ENCODE measurements at regions of chr7 and their contacts with region 1.

Region 1: GRCh38 chr7:22445140-22445743 is 54.7 kb downstream of the STEAP1B start:
- DNase-seq: peak; percentile 83 to 88 (median 88)
- ATAC-seq: peak; percentile 93 to 99 (median 96)
- H3K4me3 ChIP-seq: peak overlapping the region in 4 of 12 donors; percentile 5 to 19 (median 6)
- H3K27ac ChIP-seq: peak overlapping the region; percentile 34 to 87 (median 71)
- H3K4me1 ChIP-seq: peaks cover 3 to 36% (median 27%) of the 10 kb centered on the region in 12 donors
- H3K27me3 ChIP-seq: no peaks in the 10 kb centered on the region
- CTCF ChIP-seq: no peak
- POLR2A ChIP-seq: no peak

Region 2: GRCh38 chr7:22166928-22167327 is 278.3 kb before region 1 on chr7:
- intact Hi-C with region 1: no loop called
- DNase-seq: no peak
- ATAC-seq: no peak
- H3K4me3 ChIP-seq: no peak overlapping the region
- H3K27ac ChIP-seq: no peak overlapping the region
- H3K4me1 ChIP-seq: no peaks in the 10 kb centered on the region
- H3K27me3 ChIP-seq: no peaks in the 10 kb centered on the region
- CTCF ChIP-seq: no peak
- POLR2A ChIP-seq: no peak

Region 3: GRCh38 chr7:22219036-22219435 is 226.2 kb before region 1 on chr7:
- intact Hi-C with region 1: loop called in 2 of 10 experiments (anchors 5 to 10 kb)
- DNase-seq: no peak
- ATAC-seq: peak; percentile 15 to 47 (median 43)
- H3K4me3 ChIP-seq: peak overlapping the region; percentile 18 to 71 (median 56)
- H3K27ac ChIP-seq: peak overlapping the region; percentile 61 to 89 (median 82)
- H3K4me1 ChIP-seq: peaks cover 0 to 49% (median 15%) of the 10 kb centered on the region in 12 donors
- H3K27me3 ChIP-seq: no peaks in the 10 kb centered on the region
- CTCF ChIP-seq: no peak
- POLR2A ChIP-seq: peak in 1 of 2 donors; percentile 23

Region 4: DNA sequence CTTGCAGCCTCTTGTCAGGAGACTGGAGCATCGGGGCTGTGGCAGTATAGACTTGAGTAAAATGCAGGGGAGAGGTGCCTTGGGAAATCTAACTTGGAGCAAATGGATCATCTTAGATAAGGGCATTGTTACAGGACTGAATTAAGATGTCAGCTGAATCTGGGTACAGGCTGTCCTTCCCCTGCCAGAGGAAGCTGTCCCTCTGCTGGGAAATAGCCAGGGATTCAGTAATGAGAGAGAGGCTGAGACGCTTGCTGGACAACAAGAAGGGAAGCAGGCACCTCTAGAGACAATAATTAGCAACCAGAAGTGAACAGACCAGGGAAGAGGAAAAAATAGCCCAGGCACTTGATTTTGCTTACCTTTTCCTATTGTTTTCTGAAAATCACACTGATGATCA is 67.5 kb before region 1 on chr7:
- intact Hi-C with region 1: loop called in 1 of 10 experiments (anchors 1 kb)
- DNase-seq: peak in 1 of 5 donors; percentile 32
- ATAC-seq: peak; percentile 42 to 72 (median 60)
- H3K4me3 ChIP-seq: no peak overlapping the region
- H3K27ac ChIP-seq: peak overlapping the region in 7 of 12 donors; percentile 1 to 62 (median 33)
- H3K4me1 ChIP-seq: peaks cover 0 to 8% (median 4%) of the 10 kb centered on the region in 12 donors
- H3K27me3 ChIP-seq: no peaks in the 10 kb centered on the region
- CTCF ChIP-seq: no peak
- POLR2A ChIP-seq: no peak

Region 5: GRCh38 chr7:22481726-22482125 is 36.5 kb after region 1 on chr7:
- intact Hi-C with region 1: loop called in 1 of 10 experiments (anchors 2 kb)
- DNase-seq: peak in 3 of 5 donors; percentile 26 to 58 (median 34)
- ATAC-seq: peak; percentile 29 to 87 (median 62)
- H3K4me3 ChIP-seq: no peak overlapping the region
- H3K27ac ChIP-seq: peak overlapping the region in 8 of 12 donors; percentile 16 to 64 (median 51)
- H3K4me1 ChIP-seq: peaks cover 0 to 12% (median 6%) of the 10 kb centered on the region in 12 donors
- H3K27me3 ChIP-seq: peaks cover 0 to 2% (median 0%) of the 10 kb centered on the region in 9 donors
- CTCF ChIP-seq: no peak
- POLR2A ChIP-seq: no peak

Region 6: DNA sequence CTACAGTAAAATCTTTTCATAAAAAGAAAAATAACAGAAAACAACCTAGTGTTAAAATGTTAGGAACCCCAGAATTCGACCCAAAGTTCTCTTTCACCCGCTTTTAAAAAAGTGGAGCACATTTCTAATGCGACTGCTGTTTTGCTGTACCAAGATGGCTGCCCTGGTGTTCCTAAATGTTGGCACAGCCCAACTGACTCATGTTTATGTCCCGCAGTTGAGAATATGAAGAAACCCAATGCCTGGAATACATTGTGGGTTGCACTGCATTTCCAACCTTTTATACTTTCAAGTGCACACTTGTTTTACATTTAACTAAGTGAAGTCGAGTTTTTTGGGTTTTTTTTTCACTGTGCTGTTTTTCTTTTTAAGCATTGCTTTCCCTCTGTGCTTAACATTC is 53.8 kb after region 1 on chr7:
- intact Hi-C with region 1: no loop called
- DNase-seq: no peak
- ATAC-seq: no peak
- H3K4me3 ChIP-seq: no peak overlapping the region
- H3K27ac ChIP-seq: no peak overlapping the region
- H3K4me1 ChIP-seq: peaks cover 0 to 7% (median 0%) of the 10 kb centered on the region in 12 donors
- H3K27me3 ChIP-seq: peaks cover 0 to 12% (median 0%) of the 10 kb centered on the region in 9 donors
- CTCF ChIP-seq: no peak
- POLR2A ChIP-seq: no peak

Region 7: GRCh38 chr7:22751341-22751740 is 306.1 kb after region 1 on chr7:
- intact Hi-C with region 1: no loop called
- DNase-seq: no peak
- ATAC-seq: no peak
- H3K4me3 ChIP-seq: no peak overlapping the region
- H3K27ac ChIP-seq: no peak overlapping the region
- H3K4me1 ChIP-seq: no peaks in the 10 kb centered on the region
- H3K27me3 ChIP-seq: no peaks in the 10 kb centered on the region
- CTCF ChIP-seq: no peak
- POLR2A ChIP-seq: no peak

Region 8: GRCh38 chr7:22952286-22953015 is 507.2 kb after region 1 on chr7:
- intact Hi-C with region 1: no loop called
- DNase-seq: no peak
- ATAC-seq: no peak
- H3K4me3 ChIP-seq: no peak overlapping the region
- H3K27ac ChIP-seq: no peak overlapping the region
- H3K4me1 ChIP-seq: peaks cover 0 to 18% (median 0%) of the 10 kb centered on the region in 12 donors
- H3K27me3 ChIP-seq: no peaks in the 10 kb centered on the region
- CTCF ChIP-seq: no peak
- POLR2A ChIP-seq: no peak